ENCODE measurements at regions of chr5 and their contacts with region 1.

Region 1: DNA sequence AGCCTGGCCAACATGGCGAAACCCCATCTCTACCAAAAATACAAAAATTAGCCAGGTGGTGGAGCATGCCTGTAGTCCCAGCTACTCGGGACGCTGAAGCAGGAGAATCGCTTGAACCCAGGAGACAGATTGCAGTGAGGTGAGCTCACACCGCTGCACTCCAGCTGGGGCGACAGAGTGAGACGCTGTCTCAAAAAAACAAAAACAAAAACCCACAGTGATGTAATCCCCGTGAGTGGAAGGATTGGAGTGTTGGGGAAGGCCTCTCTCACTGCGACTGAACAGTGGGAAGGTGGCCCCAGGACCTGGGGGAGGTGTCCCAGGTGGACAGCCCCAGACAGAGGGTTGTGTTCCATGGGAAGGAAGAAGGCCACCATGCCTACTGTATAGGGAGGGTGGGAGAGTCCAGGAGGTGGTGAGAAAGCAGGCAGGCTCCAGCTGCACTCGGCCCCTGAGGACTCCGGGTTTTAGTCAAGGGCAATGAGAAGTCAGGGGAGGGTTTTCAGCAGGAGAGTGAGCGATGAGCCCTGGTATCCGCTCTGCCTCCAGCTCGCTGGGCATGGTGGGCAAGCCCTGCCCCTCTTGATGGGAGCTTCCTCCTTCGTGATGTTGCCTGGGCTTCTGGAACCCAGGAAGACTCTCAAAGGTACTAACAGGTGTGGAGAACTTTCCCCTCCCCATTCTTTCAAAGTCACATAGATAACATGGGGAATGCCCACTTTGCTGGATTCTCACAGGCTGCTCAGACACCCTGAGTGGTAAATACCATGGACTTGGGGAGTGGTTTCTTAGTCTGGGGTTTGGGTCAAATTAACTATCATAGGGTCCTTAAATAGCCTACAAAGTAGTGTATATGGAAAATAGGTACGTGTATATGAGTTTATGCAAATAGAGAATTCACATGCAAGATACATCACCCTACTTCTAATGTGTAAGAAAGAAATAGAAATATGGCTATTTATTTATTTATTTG is 74.7 kb downstream of the PPARGC1B start:
- DNase-seq: no peak
- H3K4me3 ChIP-seq: no peak overlapping the region
- H3K27ac ChIP-seq: peak overlapping the region in 27 of 59 donors; percentile 2 to 82 (median 48)
- H3K27me3 ChIP-seq: no peaks in the 10 kb centered on the region
- CTCF ChIP-seq: no peak

Region 2: DNA sequence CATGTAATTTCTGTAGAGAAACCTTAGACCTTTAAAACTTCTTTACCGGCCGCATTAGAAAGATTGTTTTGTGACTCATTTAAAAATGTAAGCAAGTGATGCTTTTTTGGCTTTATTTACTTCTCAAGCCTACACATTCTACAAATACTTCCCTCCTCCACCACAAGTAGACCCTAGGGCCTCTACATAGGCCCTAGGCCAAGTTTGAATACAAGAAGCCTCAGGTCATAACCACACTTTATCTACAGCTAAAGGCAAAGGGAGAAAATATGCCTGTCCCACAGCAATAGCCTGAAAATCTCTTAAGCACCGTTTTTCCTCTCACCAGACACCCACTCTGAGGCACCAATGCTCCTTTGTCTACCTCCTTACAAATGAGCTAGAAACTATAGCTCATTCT is 307.4 kb before region 1 on chr5:
- intact Hi-C with region 1: no loop called
- DNase-seq: no peak
- H3K4me3 ChIP-seq: no peak overlapping the region
- H3K27ac ChIP-seq: peak overlapping the region in 21 of 59 donors; percentile 3 to 54 (median 20)
- H3K27me3 ChIP-seq: no peaks in the 10 kb centered on the region
- CTCF ChIP-seq: no peak

Region 3: DNA sequence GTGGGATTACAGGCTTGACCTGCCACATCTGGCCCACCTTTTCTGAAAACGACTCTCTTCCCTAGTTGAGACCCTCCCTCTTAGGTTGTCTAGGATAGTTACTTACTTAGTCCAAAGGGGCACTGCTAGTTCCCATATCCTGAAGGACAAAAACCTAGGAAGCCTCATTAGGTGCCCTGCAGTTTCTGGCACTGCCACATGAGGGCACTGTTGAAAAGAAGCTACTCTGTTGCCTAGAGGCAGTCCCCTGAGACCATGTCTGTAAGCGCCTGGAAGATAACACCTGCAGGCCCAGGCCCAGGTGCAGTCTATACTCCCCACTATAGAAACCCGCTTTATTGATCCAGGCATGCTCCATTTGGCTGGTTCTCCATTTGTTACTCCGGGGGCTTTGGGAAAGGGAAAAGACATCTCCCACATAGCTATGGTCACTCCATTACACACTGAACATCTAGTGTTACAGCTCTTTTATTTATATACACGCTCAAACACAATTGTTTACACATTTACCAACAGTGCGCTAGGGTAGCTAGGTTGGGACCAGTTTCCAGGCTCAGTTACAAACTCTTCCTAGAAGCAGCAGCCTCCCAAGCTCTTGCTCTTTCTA is 148.1 kb before region 1 on chr5:
- intact Hi-C with region 1: no loop called
- DNase-seq: no peak
- H3K4me3 ChIP-seq: no peak overlapping the region
- H3K27ac ChIP-seq: no peak overlapping the region
- H3K27me3 ChIP-seq: peaks cover 0 to 4% (median 0%) of the 10 kb centered on the region in 45 donors
- CTCF ChIP-seq: peak in 47 of 56 donors; percentile 15 to 53 (median 37)

Region 4: DNA sequence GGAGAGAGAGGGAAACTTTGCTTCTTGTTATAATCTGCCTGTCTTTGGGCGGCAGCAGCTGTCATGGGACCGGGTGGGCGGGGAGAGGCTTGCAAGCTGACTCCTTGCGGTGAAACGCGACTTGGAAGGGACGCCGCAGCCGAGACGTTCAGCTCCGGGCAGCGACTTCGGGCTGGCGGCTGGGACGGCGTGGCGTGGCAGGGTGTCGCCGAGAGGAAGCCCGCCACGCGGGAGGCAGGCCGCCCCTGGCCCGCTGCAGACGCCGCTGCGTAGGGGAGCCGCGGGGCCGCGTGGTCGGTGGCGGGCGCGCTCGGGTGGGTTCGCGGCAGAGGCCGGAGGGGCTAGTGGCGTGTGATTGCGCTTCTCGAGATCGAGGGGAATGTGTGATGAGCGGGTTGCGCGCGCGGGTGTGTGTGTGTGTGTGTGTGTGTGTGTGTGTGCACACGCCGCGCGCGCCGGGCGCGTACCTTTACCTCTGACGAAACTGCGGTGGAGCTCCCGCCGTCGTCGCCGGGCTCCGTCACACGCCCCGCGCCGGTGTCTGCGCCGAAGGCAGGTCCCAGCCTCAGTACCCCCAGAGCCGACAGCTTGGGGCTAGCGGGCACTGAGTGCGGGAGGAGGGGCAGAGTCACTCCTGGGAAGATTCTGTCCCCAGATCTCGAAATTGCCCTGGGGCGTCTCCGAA is 73.0 kb before region 1 on chr5:
- intact Hi-C with region 1: loop called in 1 of 2 experiments (anchors 5 kb)
- DNase-seq: peak; percentile 42 to 84 (median 76)
- H3K4me3 ChIP-seq: peak overlapping the region; percentile 56 to 96 (median 82)
- H3K27ac ChIP-seq: peak overlapping the region in 53 of 59 donors; percentile 13 to 94 (median 81)
- H3K27me3 ChIP-seq: no peaks in the 10 kb centered on the region
- CTCF ChIP-seq: peak in 1 of 56 donors; percentile 15

Measured in dorsolateral prefrontal cortex (tissue), 120 donors.